Activated CD8-positive, alpha-beta T cell treated with anti-CD3 and anti-CD28 coated beads for 36 hours (primary cell): ENCODE measurements at regions of chr15 and their contacts with region 1.

Region 1: GRCh38 chr15:31365655-31366127 is 39.1 kb downstream of the KLF13 start:
- DNase-seq: peak; percentile 95
- ATAC-seq: peak; percentile 66
- H3K4me3 Mint-ChIP-seq: peak overlapping the region; percentile 78
- H3K27ac Mint-ChIP-seq: peak overlapping the region; percentile 99
- H3K4me1 Mint-ChIP-seq: peaks cover 100% of the 10 kb centered on the region
- H3K27me3 Mint-ChIP-seq: no peaks in the 10 kb centered on the region
- CTCF ChIP-seq: peak; percentile 58

Region 2: DNA sequence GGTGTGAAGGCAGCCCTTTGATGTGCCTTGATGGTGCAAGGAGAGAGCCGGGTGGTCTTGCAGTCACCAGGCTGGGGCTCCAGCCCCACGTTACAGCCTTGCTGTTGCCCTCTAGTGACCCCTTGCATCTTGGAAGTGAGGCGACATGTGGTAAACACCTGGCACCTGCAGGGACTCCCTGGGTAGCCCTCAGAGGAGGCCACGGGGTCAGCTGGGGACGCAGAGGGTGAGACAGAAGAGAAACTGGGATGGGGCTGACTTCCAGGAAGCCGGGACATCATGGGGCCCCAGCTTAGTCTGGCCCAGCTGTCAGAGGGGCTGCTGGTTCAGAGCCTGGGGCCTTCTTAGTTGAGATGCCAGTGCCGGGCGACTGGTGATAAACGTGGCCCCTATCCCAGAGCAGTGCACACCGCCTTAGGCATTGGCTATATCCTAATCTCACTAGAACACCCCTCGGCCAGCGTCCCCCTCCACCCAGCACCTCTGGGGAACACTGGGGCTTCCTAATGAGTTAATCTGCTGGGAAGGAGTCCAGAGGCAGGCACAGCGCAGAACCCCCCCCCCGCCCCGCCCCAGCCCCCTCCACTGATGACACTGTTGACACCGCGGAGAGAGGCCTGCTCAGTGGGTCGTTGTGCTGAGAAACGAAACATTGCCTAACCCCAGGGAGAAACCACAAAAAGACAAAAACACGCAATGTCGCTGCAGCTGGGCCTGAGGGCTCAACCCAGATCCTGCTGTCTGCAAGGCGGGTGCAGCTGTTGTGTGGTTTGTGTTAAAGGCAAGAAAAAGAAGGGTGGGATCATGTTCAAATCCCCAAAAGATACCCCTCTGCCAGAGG is 99.6 kb before region 1 on chr15:
- CTCF ChIA-PET with region 1: no interaction called
- POLR2A ChIA-PET with region 1: interaction called, 4 read pairs
- intact Hi-C with region 1: loop called (anchors 5 kb)
- DNase-seq: peak; percentile 81
- ATAC-seq: peak; percentile 66
- H3K4me3 Mint-ChIP-seq: no peak overlapping the region
- H3K27ac Mint-ChIP-seq: peak overlapping the region; percentile 69
- H3K4me1 Mint-ChIP-seq: peaks cover 58% of the 10 kb centered on the region
- H3K27me3 Mint-ChIP-seq: peaks cover 3% of the 10 kb centered on the region
- CTCF ChIP-seq: no peak

Region 3: DNA sequence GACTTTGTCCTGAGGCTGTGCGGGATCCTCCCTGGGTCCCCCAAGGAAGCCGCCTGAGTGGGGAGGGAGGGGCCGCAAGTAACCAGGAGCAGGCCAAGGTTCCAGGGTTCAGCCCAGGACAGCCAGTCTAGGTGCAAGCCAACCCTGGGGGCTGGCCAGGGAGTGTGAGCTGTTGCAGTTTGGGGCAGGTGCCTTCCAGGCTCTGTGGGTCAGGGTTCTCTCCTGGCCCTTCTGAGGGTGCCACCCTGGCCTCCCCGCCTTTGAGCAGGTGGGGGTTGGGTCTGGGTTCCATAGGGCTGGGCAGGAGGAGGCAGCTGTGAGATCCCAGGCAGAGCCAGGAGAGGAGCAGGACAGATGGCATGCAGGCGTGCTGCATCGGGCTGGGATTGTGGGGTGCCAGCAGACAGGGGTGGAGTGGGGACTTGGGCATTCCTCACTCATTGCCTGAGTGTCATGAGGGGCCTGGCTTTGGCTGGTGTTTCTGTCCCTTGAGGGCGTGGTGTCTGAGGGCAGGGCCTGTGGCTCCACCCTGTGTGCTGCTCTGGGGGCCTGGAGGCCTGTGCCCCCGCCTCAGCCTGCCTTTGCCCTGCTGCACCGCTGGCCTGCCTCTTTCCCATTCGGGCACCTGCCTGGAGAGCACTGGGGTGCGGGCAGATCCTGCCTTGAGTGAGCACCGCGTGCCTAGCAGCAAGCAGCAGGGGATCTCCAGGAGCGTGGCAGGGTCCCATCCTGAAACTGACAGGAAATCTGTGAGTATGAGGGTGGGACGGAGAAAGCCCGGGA is 20.7 kb before region 1 on chr15:
- CTCF ChIA-PET with region 1: interaction called, 47 read pairs
- POLR2A ChIA-PET with region 1: interaction called, 444 read pairs
- intact Hi-C with region 1: no loop called
- DNase-seq: peak; percentile 75
- ATAC-seq: peak; percentile 40
- H3K4me3 Mint-ChIP-seq: peak overlapping the region; percentile 90
- H3K27ac Mint-ChIP-seq: peak overlapping the region; percentile 99
- H3K4me1 Mint-ChIP-seq: peaks cover 84% of the 10 kb centered on the region
- H3K27me3 Mint-ChIP-seq: no peaks in the 10 kb centered on the region
- CTCF ChIP-seq: no peak

Region 4: GRCh38 chr15:31379042-31379441 is 13.4 kb after region 1 on chr15:
- CTCF ChIA-PET with region 1: interaction called, 14 read pairs
- POLR2A ChIA-PET with region 1: interaction called, 33 read pairs
- intact Hi-C with region 1: no loop called
- DNase-seq: peak; percentile 61
- ATAC-seq: peak; percentile 58
- H3K4me3 Mint-ChIP-seq: no peak overlapping the region
- H3K27ac Mint-ChIP-seq: peak overlapping the region; percentile 82
- H3K4me1 Mint-ChIP-seq: peaks cover 60% of the 10 kb centered on the region
- H3K27me3 Mint-ChIP-seq: no peaks in the 10 kb centered on the region
- CTCF ChIP-seq: no peak

Region 5: GRCh38 chr15:31472636-31473384 is 107.1 kb after region 1 on chr15:
- CTCF ChIA-PET with region 1: interaction called, 6 read pairs
- POLR2A ChIA-PET with region 1: interaction called, 11 read pairs
- intact Hi-C with region 1: no loop called
- DNase-seq: peak; percentile 76
- ATAC-seq: peak; percentile 87
- H3K4me3 Mint-ChIP-seq: peak overlapping the region; percentile 65
- H3K27ac Mint-ChIP-seq: peak overlapping the region; percentile 90
- H3K4me1 Mint-ChIP-seq: peaks cover 63% of the 10 kb centered on the region
- H3K27me3 Mint-ChIP-seq: no peaks in the 10 kb centered on the region
- CTCF ChIP-seq: no peak

Region 6: GRCh38 chr15:31499953-31500765 is 134.5 kb after region 1 on chr15:
- CTCF ChIA-PET with region 1: no interaction called
- POLR2A ChIA-PET with region 1: no interaction called
- intact Hi-C with region 1: no loop called
- DNase-seq: no peak
- ATAC-seq: no peak
- H3K4me3 Mint-ChIP-seq: no peak overlapping the region
- H3K27ac Mint-ChIP-seq: no peak overlapping the region
- H3K4me1 Mint-ChIP-seq: peaks cover 5% of the 10 kb centered on the region
- H3K27me3 Mint-ChIP-seq: no peaks in the 10 kb centered on the region
- CTCF ChIP-seq: no peak

Region 7: DNA sequence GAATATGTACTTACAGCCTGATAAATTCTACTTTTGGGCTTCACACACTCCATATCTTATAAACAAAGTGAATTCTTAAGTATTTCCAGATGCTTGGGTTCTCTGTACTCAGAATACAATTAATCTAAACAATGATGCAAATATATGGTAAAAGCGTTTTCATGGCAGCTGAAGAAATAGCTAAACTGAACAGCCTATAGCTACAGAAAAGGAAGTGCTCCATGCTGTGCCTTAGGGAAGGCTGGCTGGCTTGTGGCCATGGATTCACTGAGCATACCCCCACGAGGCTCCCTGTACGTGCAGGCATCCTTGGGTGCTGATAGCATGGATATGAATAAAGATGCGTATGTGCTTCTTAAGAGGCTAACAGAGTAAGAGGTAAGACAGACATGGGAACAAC is 224.9 kb after region 1 on chr15:
- CTCF ChIA-PET with region 1: no interaction called
- POLR2A ChIA-PET with region 1: no interaction called
- intact Hi-C with region 1: no loop called
- DNase-seq: no peak
- ATAC-seq: no peak
- H3K4me3 Mint-ChIP-seq: no peak overlapping the region
- H3K27ac Mint-ChIP-seq: no peak overlapping the region
- H3K4me1 Mint-ChIP-seq: no peaks in the 10 kb centered on the region
- H3K27me3 Mint-ChIP-seq: peaks cover 7% of the 10 kb centered on the region
- CTCF ChIP-seq: no peak